ENCODE measurements at regions of chr1 and their contacts with region 1.

Region 1: DNA sequence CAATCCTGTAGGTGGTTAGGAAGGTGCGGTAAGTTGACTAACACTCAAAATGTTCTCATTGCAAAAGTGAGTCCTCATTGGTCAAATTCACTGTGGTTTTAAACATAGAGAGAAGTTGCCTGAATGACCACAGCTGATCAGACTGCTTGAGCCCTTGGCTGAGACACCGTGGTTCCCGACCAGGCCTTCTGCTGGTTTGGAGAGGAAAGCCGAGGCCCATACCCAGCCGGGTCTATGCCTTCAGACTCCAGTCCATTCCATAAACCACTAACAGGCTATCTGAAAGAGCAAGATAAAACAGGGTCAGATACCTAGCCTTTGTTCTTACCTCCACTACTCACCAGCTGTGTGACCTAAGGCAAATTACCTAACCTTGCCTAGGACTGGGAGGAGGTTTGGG is 133.9 kb downstream of the LMX1A start:
- DNase-seq: no peak

Region 2: DNA sequence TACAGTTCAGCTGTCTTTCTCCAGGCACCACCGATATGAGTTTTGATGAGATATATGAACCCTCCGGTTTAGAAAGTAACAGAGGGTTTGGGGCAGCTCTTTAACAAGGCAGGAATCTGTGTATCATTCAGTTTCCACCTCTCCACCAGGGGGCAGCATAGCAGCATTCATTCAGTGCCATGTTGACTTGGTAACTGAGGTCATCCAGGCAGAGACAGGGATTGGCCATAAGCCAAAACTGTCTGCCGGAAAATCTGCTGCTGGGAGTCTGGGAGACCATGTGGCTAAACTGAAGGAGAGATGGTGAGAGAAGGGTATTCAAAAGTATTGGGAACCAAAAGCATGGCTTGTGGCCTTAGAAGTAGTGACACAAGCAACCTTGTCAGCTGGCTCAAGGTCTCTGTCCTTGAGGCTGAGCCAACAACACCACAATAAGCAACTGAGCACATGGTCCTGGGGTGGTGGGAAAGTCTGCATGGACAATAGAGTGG is 35.4 kb after region 1 on chr1:
- intact Hi-C with region 1: no loop called
- DNase-seq: no peak

Region 3: GRCh38 chr1:165288350-165289148 is 66.0 kb after region 1 on chr1:
- intact Hi-C with region 1: loop called in 1 of 2 experiments (anchors 2 kb)
- DNase-seq: no peak